ENCODE measurements at regions of chr14 and their contacts with region 1.

Region 1: DNA sequence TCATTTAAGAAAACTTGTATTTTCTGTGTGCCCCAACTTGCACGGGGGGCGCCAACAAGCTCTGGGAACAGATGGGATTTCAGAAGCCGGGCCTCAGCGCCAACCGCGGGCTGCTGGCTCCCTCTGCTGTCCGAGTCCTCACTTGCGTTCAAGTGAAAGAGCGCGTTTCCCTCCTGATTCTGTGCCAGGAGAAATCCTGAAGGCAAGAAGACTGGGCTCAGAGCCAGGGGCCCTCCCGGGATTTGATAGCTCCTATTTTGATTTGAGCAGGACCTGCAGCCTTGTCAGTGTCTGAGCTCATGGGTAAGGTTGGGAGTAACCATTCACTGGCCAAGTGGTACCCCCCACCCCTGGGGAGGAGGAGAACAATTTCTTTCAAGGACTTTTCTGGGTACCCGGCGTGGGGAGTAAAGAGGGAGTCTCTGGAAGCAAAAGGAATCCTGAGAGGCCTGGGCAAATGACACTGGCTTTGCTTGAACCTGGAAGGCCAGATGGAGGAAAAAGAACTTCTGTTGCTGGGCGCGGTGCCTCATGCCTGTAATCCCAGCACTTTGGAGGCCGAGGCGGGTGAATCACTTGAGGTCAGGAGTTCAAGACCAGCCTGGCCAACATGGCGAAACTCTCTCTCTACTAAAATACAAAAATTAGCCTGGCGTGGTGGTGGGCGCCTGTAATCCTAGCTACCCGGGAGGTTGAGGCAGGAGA is 179.0 kb upstream of the RGS6 start:
- DNase-seq: peak; percentile 84
- H3K4me3 ChIP-seq: peak overlapping the region; percentile 14 to 28; a peak in 2 of 4 replicates
- H3K27ac ChIP-seq: no peak overlapping the region
- H3K4me1 ChIP-seq: peaks cover 5 to 6% of the 10 kb centered on the region in 2 experiments; a peak in 2 of 4 replicates
- H3K27me3 ChIP-seq: no peaks in the 10 kb centered on the region
- CTCF ChIP-seq: peak; percentile 97
- EP300 ChIP-seq: peak in 1 of 2 experiments; percentile 7; a peak in 1 of 4 replicates
- RAD21 ChIP-seq: peak; percentile 100

Region 2: DNA sequence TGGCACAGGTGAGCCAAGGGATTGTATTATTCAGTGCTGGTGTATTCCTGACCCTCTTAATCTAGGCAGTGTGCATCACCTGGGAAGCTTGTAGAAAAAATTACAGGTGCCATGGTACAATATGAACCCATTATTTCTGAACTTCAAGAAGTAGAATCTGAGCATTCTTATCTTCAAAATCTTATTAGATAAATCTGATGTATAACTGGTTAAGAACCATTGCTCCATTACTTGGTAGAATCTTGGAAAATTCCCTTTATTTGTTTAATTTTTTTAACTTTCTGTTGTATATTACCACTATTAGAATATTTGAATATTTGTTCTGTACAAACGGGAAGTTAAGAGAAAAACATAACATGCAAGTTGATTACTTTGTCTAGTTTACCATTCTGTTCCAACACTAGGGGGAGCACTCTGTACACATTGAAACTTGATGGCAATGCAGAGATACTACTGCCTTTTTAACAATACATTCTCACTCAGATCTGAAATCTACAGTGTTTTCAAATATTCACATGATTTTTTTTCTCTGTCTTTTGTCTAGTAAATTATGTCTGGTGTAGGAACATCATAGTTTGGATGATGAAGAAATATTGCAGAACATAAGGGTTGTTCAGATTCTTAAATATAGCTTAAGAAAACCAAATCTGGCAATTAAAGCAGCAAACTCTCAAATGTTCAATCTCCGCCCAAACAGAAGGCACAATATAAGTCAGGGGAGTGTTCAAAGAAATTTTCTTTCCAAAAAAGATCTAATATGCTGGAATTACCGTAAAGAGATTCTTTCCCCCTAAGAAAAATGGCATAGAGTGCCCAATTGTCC is 649.4 kb before region 1 on chr14:
- CTCF ChIA-PET with region 1: interaction called, 16 read pairs
- POLR2A ChIA-PET with region 1: no interaction called
- DNase-seq: peak; percentile 46
- H3K4me3 ChIP-seq: no peak overlapping the region; a peak in 1 of 4 replicates
- H3K27ac ChIP-seq: peak overlapping the region in 1 of 2 experiments; percentile 6; a peak in 1 of 4 replicates
- H3K4me1 ChIP-seq: no peaks in the 10 kb centered on the region
- H3K27me3 ChIP-seq: no peaks in the 10 kb centered on the region
- CTCF ChIP-seq: peak; percentile 93
- EP300 ChIP-seq: no peak
- RAD21 ChIP-seq: peak; percentile 79

Region 3: DNA sequence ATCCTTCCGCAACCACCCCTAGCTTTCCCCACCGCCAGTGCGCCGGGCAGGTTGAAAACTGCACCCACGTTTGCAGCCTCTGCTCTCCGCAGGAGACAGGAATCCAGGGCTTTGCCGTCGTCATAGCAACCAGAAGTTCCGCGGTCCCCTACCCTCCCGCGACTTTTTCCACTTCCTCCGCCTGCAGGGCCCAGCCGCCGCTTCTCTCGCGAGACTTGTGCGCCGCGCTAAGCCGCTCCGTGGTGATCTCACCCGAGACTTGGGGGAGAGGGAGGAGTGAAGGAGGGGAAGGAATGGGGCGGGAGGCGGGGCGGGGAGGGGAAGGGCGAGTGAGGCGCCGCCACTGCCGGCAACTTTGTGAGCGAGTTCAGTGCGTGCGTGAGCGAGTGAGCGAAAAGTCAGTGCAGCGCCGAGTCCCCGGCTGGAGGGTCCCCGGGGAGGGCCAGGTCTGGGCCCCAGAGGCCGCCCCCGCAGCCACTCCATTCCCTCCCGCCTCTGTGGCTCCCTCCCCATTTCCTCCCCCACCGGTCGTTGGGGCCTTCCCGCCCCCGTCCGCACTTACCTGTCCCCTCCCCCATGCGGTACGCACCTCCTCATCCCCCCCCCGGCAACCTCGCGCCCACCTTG is 433.1 kb before region 1 on chr14:
- CTCF ChIA-PET with region 1: interaction called, 44 read pairs
- POLR2A ChIA-PET with region 1: interaction called, 5 read pairs
- DNase-seq: peak; percentile 95
- H3K4me3 ChIP-seq: peak within 1 kb of the TSS; percentile 95 to 96
- H3K27ac ChIP-seq: peak within 1 kb of the TSS; percentile 79 to 92
- H3K4me1 ChIP-seq: peaks cover 12 to 15% of the 10 kb centered on the region in 2 experiments; a peak in 3 of 4 replicates
- H3K27me3 ChIP-seq: no peaks in the 10 kb centered on the region
- CTCF ChIP-seq: no peak
- EP300 ChIP-seq: no peak
- RAD21 ChIP-seq: no peak; the same call in 1 of the 2 replicates

Region 4: DNA sequence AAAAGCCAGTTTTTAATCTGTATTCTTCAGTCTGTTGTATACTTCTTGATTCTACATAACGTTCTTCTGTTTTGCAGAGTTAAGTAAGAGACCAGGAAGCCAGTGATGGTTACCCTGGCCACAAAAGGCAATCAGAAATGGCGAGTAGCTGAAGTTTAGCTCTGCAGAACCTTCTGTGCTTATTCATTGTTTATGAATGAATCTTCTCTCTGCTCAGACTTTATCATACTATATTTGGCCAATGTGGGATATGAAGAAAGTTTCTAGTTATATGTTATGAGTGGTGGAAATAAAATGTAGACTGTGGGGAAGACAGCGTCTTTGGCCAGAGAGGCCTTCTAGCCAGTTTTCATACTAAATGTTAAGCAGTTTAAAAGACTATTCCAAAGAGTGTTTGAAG is 70.9 kb before region 1 on chr14:
- CTCF ChIA-PET with region 1: no interaction called
- POLR2A ChIA-PET with region 1: no interaction called
- DNase-seq: no peak
- H3K4me3 ChIP-seq: no peak overlapping the region
- H3K27ac ChIP-seq: no peak overlapping the region
- H3K4me1 ChIP-seq: peaks cover 7% of the 10 kb centered on the region in 2 experiments
- H3K27me3 ChIP-seq: no peaks in the 10 kb centered on the region
- CTCF ChIP-seq: no peak
- EP300 ChIP-seq: no peak
- RAD21 ChIP-seq: no peak

Region 5: DNA sequence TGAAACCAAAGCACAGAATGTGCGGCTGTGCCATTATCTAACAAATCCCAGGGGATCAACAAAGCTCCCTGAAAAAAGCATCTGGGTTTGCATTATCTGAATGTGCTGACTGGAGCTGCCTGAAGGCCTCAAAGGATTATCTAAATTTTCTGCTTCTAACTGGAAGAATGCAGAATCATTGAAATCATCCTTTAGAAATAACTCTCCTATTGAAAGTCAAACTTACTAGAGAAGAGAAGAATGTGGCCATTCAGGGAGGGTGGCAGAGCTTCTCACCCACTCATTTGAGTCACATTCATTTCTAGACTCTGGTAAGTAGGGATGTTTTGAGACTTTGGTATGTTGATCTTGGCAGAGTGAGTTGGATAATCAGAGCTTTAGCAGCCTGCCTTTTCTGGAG is 41.7 kb before region 1 on chr14:
- CTCF ChIA-PET with region 1: interaction called, 20 read pairs
- POLR2A ChIA-PET with region 1: no interaction called
- DNase-seq: no peak
- H3K4me3 ChIP-seq: no peak overlapping the region
- H3K27ac ChIP-seq: peak overlapping the region; percentile 34 to 88; a peak in 3 of 4 replicates
- H3K4me1 ChIP-seq: peaks cover 5 to 63% of the 10 kb centered on the region in 2 experiments
- H3K27me3 ChIP-seq: no peaks in the 10 kb centered on the region
- CTCF ChIP-seq: no peak
- EP300 ChIP-seq: peak in 1 of 2 experiments; percentile 52; a peak in 1 of 4 replicates
- RAD21 ChIP-seq: no peak

Region 6: DNA sequence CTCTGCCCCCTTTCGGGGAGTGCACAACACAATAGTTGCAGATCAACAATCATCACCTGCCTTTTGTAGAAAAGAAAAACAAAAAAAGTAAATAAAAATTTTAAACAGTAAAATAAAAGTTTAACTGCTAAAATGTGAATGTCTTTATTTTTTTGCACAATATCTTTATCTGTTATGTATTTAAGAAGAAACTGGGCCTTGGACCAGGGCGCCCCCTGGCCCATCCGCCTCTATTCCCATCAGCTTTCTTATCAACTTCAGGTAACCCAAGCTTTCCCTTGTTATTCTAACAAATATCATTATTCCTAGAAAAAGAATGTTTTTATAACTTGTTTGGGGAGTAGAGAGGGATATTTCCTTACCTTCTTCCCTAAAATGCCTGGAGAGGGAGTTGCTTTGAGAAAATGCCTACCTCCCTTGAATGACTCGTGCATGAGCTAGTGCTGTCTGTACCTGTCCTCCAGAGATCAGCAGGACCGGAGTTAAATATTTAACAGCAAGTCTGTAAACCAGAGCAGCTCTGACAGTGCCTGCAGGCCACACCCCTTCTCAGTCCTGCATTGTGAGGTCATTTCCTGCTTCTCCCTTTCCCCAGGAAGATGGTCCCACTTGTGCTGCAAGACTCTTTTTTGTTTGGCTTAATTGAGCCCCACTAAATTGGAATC is 13.9 kb before region 1 on chr14:
- CTCF ChIA-PET with region 1: interaction called, 35 read pairs
- POLR2A ChIA-PET with region 1: no interaction called
- DNase-seq: peak; percentile 53
- H3K4me3 ChIP-seq: no peak overlapping the region
- H3K27ac ChIP-seq: peak overlapping the region in 1 of 2 experiments; percentile 22; a peak in 2 of 4 replicates
- H3K4me1 ChIP-seq: peaks cover 4 to 8% of the 10 kb centered on the region in 2 experiments; a peak in 2 of 4 replicates
- H3K27me3 ChIP-seq: no peaks in the 10 kb centered on the region
- CTCF ChIP-seq: peak; percentile 21; the same call in 1 of the 2 replicates
- EP300 ChIP-seq: no peak
- RAD21 ChIP-seq: no peak

Region 7: GRCh38 chr14:71815110-71815509 is 61.8 kb after region 1 on chr14:
- CTCF ChIA-PET with region 1: no interaction called
- POLR2A ChIA-PET with region 1: no interaction called
- DNase-seq: no peak
- H3K4me3 ChIP-seq: no peak overlapping the region
- H3K27ac ChIP-seq: no peak overlapping the region
- H3K4me1 ChIP-seq: no peaks in the 10 kb centered on the region
- H3K27me3 ChIP-seq: peaks cover 26% of the 10 kb centered on the region; the same call in 1 of the 2 replicates
- CTCF ChIP-seq: no peak
- EP300 ChIP-seq: no peak
- RAD21 ChIP-seq: no peak

Region 8: DNA sequence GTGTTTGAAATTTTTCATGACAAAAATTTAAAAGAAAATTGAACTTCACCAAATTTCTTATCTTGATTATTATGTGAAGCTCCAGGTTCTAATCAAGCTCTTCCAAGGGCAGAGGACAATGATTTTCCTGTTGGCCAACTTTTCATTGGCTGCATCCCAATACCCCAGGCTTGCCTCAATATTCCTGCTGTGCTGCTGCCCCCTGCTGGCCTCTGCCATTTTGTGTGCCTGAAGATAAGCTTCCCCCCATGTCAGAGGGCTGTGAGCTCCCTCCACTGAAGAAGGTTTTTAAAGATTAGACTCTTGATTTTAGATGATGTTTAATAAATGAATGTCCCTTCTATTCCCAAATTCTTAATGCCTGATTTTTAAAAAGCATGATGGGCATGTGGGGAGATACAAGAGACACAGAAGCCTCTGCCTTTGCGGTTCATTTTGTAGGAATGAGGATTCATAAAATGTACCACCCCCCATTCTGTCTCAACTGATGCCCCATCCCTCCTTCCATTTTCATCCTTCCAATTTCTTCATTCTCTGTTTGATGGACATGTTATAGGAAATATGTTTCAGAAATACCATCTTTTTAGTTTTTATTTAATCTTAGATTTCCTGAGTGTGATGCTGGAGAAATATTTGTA is 102.2 kb after region 1 on chr14:
- CTCF ChIA-PET with region 1: interaction called, 19 read pairs
- POLR2A ChIA-PET with region 1: no interaction called
- DNase-seq: peak; percentile 65
- H3K4me3 ChIP-seq: no peak overlapping the region; a peak in 1 of 4 replicates
- H3K27ac ChIP-seq: no peak overlapping the region
- H3K4me1 ChIP-seq: no peaks in the 10 kb centered on the region; a peak in 2 of 4 replicates
- H3K27me3 ChIP-seq: no peaks in the 10 kb centered on the region
- CTCF ChIP-seq: peak; percentile 83
- EP300 ChIP-seq: no peak
- RAD21 ChIP-seq: peak; percentile 79

Measured in SK-N-SH (cell line).